ENCODE measurements at regions of chr17 and their contacts with region 1.

Region 1: GRCh38 chr17:58006924-58007780 is at the start of gene SRSF1:
- DNase-seq: peak; percentile 99
- H3K4me3 ChIP-seq: peak within 1 kb of the TSS; percentile 48 to 97 (median 85)
- H3K27ac ChIP-seq: peak within 1 kb of the TSS; percentile 85 to 100 (median 98)
- H3K4me1 ChIP-seq: peaks cover 26 to 54% (median 49%) of the 10 kb centered on the region in 6 donors
- H3K27me3 ChIP-seq: no peaks in the 10 kb centered on the region
- CTCF ChIP-seq: no peak
- POLR2A ChIP-seq: peak; percentile 48 to 83 (median 66)
- total RNA-seq, gene SRSF1: 165 to 213 (median 174) TPM

Region 2: GRCh38 chr17:57861000-57861789 is 146.0 kb before region 1 on chr17:
- intact Hi-C with region 1: no loop called
- DNase-seq: peak; percentile 91
- H3K4me3 ChIP-seq: peak overlapping the region; percentile 2 to 70 (median 38)
- H3K27ac ChIP-seq: peak overlapping the region in 7 of 8 donors; percentile 39 to 85 (median 70)
- H3K4me1 ChIP-seq: peaks cover 12 to 51% (median 33%) of the 10 kb centered on the region in 6 donors
- H3K27me3 ChIP-seq: peaks cover 0 to 48% (median 8%) of the 10 kb centered on the region in 7 donors
- CTCF ChIP-seq: no peak
- POLR2A ChIP-seq: no peak

Region 3: DNA sequence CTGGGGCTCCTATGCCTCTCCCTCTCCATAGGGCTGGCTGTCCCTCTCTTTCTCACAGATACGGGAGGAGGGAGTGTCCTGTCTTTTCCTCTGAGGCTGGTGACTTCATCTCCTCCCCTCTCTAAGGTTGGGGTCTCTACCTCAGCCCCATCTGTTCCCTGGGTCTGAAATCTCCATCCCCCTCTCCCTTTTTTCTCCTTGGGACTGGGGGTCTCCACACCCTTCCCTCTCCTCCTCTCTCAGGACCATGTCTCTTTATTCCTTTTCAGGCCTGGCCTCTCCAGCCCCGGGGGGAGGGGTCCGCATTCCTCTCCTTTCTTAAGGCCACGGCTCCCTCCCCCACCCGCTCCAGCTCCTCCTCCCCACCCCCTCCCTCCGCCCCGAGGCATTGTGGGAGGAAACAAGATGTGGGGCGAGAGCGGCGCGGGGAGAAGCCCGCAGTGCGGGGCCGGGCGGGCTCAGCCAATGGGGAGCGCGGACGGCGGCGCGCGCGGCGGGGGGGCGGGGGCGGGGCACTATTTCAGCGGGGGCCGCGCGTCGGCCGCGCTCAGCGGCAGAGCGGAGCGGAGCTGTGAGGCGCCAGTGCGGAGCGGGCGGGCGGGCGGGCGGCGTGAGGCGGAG is 75.8 kb after region 1 on chr17 and contains the start of gene DYNLL2:
- intact Hi-C with region 1: loop called (anchors 10 kb)
- DNase-seq: peak; percentile 97
- H3K4me3 ChIP-seq: peak within 1 kb of the TSS; percentile 83 to 99 (median 96)
- H3K27ac ChIP-seq: peak within 1 kb of the TSS; percentile 85 to 99 (median 96)
- H3K4me1 ChIP-seq: peaks cover 18 to 49% (median 41%) of the 10 kb centered on the region in 6 donors
- H3K27me3 ChIP-seq: no peaks in the 10 kb centered on the region
- CTCF ChIP-seq: peak in 1 of 11 experiments; percentile 8
- POLR2A ChIP-seq: no peak
- total RNA-seq, gene DYNLL2: 19.4 to 29.7 (median 23.1) TPM